ENCODE measurements at regions of chr7 and their contacts with region 1.

Region 1: GRCh38 chr7:159158888-159159405 is 14.3 kb upstream of the VIPR2 start:
- DNase-seq: no peak
- ATAC-seq: no peak
- H3K4me3 ChIP-seq: no peak overlapping the region
- H3K27ac ChIP-seq: no peak overlapping the region
- H3K4me1 ChIP-seq: no peaks in the 10 kb centered on the region
- H3K27me3 ChIP-seq: no peaks in the 10 kb centered on the region
- CTCF ChIP-seq: no peak
- EP300 ChIP-seq: no peak
- POLR2A ChIP-seq: no peak
- RAD21 ChIP-seq: no peak

Region 2: DNA sequence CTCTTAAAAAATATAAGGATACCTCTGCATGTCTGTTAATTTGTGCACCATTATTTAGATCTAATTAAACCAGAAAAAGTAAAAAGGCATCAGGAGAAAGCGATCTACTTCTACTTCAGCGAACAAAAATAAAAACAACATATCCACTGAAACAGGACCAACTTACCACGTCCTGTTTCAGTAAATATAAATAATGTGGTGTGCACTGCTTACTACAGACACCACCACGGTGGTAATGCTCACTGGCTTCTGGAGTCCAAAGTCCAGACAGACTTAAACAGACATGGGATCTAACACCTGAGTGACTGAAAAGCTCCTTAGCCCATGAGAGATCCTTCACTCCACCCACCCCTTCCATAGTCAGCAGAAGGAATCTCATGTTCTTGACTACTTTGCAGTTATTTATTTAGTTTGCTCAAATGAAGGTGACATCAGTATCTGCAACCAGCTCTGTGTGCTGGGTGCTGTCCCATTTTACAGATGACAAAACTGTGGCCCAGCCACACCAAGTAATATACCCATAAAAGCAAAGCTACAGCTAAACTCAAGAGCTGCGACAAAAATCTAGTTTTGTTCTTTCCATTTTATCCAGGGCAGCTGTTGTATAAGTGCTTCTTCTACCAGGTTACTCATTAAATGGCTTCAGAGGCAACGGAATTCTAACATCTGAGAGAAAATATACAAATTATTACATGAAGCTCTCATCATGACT is 392.2 kb before region 1 on chr7:
- CTCF ChIA-PET with region 1: no interaction called
- POLR2A ChIA-PET with region 1: no interaction called
- RAD21 ChIA-PET with region 1: no interaction called
- SMC1A ChIA-PET with region 1: no interaction called
- in situ Hi-C with region 1: no loop called
- intact Hi-C with region 1: no loop called
- DNase-seq: no peak
- ATAC-seq: peak; percentile 67
- H3K4me3 ChIP-seq: no peak overlapping the region
- H3K27ac ChIP-seq: no peak overlapping the region
- H3K4me1 ChIP-seq: no peaks in the 10 kb centered on the region
- H3K27me3 ChIP-seq: no peaks in the 10 kb centered on the region
- CTCF ChIP-seq: no peak
- EP300 ChIP-seq: no peak
- POLR2A ChIP-seq: no peak
- RAD21 ChIP-seq: no peak

Region 3: GRCh38 chr7:159127691-159128642 is 31.0 kb before region 1 on chr7:
- CTCF ChIA-PET with region 1: no interaction called
- POLR2A ChIA-PET with region 1: no interaction called
- RAD21 ChIA-PET with region 1: no interaction called
- SMC1A ChIA-PET with region 1: no interaction called
- in situ Hi-C with region 1: no loop called
- intact Hi-C with region 1: loop called (anchors 2 kb)
- DNase-seq: no peak
- ATAC-seq: no peak
- H3K4me3 ChIP-seq: no peak overlapping the region
- H3K27ac ChIP-seq: no peak overlapping the region
- H3K4me1 ChIP-seq: no peaks in the 10 kb centered on the region
- H3K27me3 ChIP-seq: no peaks in the 10 kb centered on the region
- CTCF ChIP-seq: no peak
- EP300 ChIP-seq: no peak
- POLR2A ChIP-seq: no peak
- RAD21 ChIP-seq: no peak

Measured in GM12878 (cell line).